WTC11 (cell line): ENCODE measurements at regions of chr12 and their contacts with region 1.

Region 1: GRCh38 chr12:57111031-57111734 is at the start of gene STAT6:
- DNase-seq: peak; percentile 48
- ATAC-seq: peak; percentile 8
- H3K4me3 Mint-ChIP-seq: peak within 1 kb of the TSS; percentile 72
- H3K27ac Mint-ChIP-seq: peak within 1 kb of the TSS; percentile 98
- H3K4me1 Mint-ChIP-seq: peaks cover 36% of the 10 kb centered on the region
- H3K27me3 Mint-ChIP-seq: no peaks in the 10 kb centered on the region
- CTCF ChIP-seq: no peak
- total RNA-seq, gene STAT6: 47.0 to 50.0 TPM (median 48.9 TPM) in 3 replicates

Region 2: GRCh38 chr12:56636675-56637540 is 474.3 kb before region 1 on chr12:
- CTCF ChIA-PET with region 1: interaction called, 13 read pairs
- POLR2A ChIA-PET with region 1: no interaction called
- DNase-seq: peak; percentile 99
- ATAC-seq: peak; percentile 70
- H3K4me3 Mint-ChIP-seq: peak overlapping the region; percentile 97
- H3K27ac Mint-ChIP-seq: peak overlapping the region; percentile 99
- H3K4me1 Mint-ChIP-seq: peaks cover 42% of the 10 kb centered on the region
- H3K27me3 Mint-ChIP-seq: no peaks in the 10 kb centered on the region
- CTCF ChIP-seq: peak; percentile 41; the same call in 1 of the 2 replicates

Region 3: DNA sequence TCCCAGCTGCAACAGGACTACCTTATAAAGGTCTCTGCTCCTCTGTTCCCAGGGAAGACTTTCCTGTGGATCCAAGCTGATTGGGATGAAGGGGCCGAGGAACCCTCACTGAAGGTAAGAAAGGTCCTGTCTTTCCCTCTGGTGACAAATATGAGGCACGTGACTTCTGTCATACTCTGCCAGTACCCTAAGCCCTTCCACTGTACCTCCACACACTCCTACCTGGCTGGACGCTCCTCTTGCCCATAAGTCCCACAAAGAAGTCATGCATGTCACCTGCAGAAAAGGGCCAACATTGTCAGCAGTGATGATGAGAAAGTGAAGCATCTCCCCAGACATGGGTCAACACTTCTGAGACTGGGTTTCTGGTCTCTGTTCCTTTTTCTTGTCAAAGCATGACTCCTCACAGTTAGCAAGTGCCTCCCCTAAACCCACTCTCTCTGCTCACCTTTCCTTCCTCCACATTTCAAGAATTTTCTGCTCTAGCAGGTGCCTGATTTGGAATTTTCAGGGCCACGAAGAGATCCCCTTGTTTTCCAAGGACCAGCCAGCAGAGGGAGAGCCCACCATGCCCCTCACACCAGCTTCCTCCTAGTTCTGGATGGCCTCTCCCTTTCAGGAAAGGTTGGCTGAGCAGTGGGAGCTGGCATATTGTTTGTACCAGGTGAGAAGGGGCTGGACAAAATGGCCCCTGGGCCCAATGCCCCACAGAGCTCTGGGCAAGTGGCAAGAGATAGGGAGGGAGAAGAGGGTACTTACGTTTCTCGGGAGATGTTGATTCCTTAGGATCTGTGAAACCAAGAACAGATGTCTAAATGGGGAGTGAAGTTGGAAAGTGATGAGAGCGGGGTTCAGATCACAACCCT is 98.3 kb before region 1 on chr12:
- CTCF ChIA-PET with region 1: interaction called, 33 read pairs
- POLR2A ChIA-PET with region 1: interaction called, 4 read pairs
- DNase-seq: no peak
- ATAC-seq: peak; percentile 22
- H3K4me3 Mint-ChIP-seq: no peak overlapping the region
- H3K27ac Mint-ChIP-seq: no peak overlapping the region; the same call in 1 of the 2 replicates
- H3K4me1 Mint-ChIP-seq: peaks cover 53% of the 10 kb centered on the region
- H3K27me3 Mint-ChIP-seq: peaks cover 4% of the 10 kb centered on the region
- CTCF ChIP-seq: no peak

Region 4: GRCh38 chr12:57063991-57064685 is 47.0 kb before region 1 on chr12:
- CTCF ChIA-PET with region 1: interaction called, 270 read pairs
- POLR2A ChIA-PET with region 1: interaction called, 32 read pairs
- DNase-seq: no peak
- ATAC-seq: no peak
- H3K4me3 Mint-ChIP-seq: no peak overlapping the region
- H3K27ac Mint-ChIP-seq: no peak overlapping the region
- H3K4me1 Mint-ChIP-seq: no peaks in the 10 kb centered on the region
- H3K27me3 Mint-ChIP-seq: no peaks in the 10 kb centered on the region
- CTCF ChIP-seq: no peak

Region 5: GRCh38 chr12:57096099-57096572 is 15.0 kb before region 1 on chr12:
- CTCF ChIA-PET with region 1: interaction called, 219 read pairs
- POLR2A ChIA-PET with region 1: interaction called, 26 read pairs
- DNase-seq: no peak
- ATAC-seq: no peak
- H3K4me3 Mint-ChIP-seq: no peak overlapping the region
- H3K27ac Mint-ChIP-seq: peak overlapping the region; percentile 85
- H3K4me1 Mint-ChIP-seq: peaks cover 25% of the 10 kb centered on the region
- H3K27me3 Mint-ChIP-seq: no peaks in the 10 kb centered on the region
- CTCF ChIP-seq: no peak

Region 6: GRCh38 chr12:57182921-57183790 is 72.0 kb after region 1 on chr12:
- CTCF ChIA-PET with region 1: interaction called, 12 read pairs
- POLR2A ChIA-PET with region 1: no interaction called
- DNase-seq: peak; percentile 90
- ATAC-seq: peak; percentile 96
- H3K4me3 Mint-ChIP-seq: no peak overlapping the region
- H3K27ac Mint-ChIP-seq: peak overlapping the region; percentile 99
- H3K4me1 Mint-ChIP-seq: peaks cover 4% of the 10 kb centered on the region
- H3K27me3 Mint-ChIP-seq: no peaks in the 10 kb centered on the region
- CTCF ChIP-seq: peak; percentile 81; the same call in 1 of the 2 replicates

Region 7: GRCh38 chr12:57340104-57340503 is 228.9 kb after region 1 on chr12:
- CTCF ChIA-PET with region 1: no interaction called
- POLR2A ChIA-PET with region 1: no interaction called
- DNase-seq: no peak
- ATAC-seq: no peak
- H3K4me3 Mint-ChIP-seq: no peak overlapping the region
- H3K27ac Mint-ChIP-seq: no peak overlapping the region
- H3K4me1 Mint-ChIP-seq: peaks cover 25% of the 10 kb centered on the region
- H3K27me3 Mint-ChIP-seq: no peaks in the 10 kb centered on the region
- CTCF ChIP-seq: no peak